Naive thymus-derived CD4-positive, alpha-beta T cell (primary cell): ENCODE measurements at regions of chr4 and their contacts with region 1.

Region 1: GRCh38 chr4:98879515-98879914 is 49.4 kb downstream of the EIF4E start:
- DNase-seq: no peak
- ATAC-seq: no peak
- H3K4me3 ChIP-seq: no peak overlapping the region
- H3K4me3 Mint-ChIP-seq: no peak overlapping the region
- H3K27ac ChIP-seq: no peak overlapping the region
- H3K27ac Mint-ChIP-seq: peak overlapping the region in 3 of 9 donors; percentile 5 to 72 (median 5)
- H3K4me1 ChIP-seq: no peaks in the 10 kb centered on the region
- H3K4me1 Mint-ChIP-seq: peaks cover 0 to 4% (median 0%) of the 10 kb centered on the region in 7 donors
- H3K27me3 ChIP-seq: no peaks in the 10 kb centered on the region
- H3K27me3 Mint-ChIP-seq: no peaks in the 10 kb centered on the region

Region 2: GRCh38 chr4:98919996-98920395 is 40.5 kb after region 1 on chr4:
- CTCF ChIA-PET with region 1: no interaction called
- POLR2A ChIA-PET with region 1: no interaction called
- intact Hi-C with region 1: loop called in 1 of 2 experiments (anchors 5 kb)
- DNase-seq: no peak
- ATAC-seq: no peak
- H3K4me3 ChIP-seq: no peak overlapping the region
- H3K4me3 Mint-ChIP-seq: peak overlapping the region in 1 of 10 donors; percentile 17
- H3K27ac ChIP-seq: no peak overlapping the region
- H3K27ac Mint-ChIP-seq: no peak overlapping the region
- H3K4me1 ChIP-seq: peaks cover 0 to 3% of the 10 kb centered on the region in 2 donors
- H3K4me1 Mint-ChIP-seq: peaks cover 14 to 58% (median 42%) of the 10 kb centered on the region in 7 donors
- H3K27me3 ChIP-seq: no peaks in the 10 kb centered on the region
- H3K27me3 Mint-ChIP-seq: no peaks in the 10 kb centered on the region